ENCODE measurements at regions of chr3 and their contacts with region 1.

Region 1: GRCh38 chr3:186617038-186617946 is 4.4 kb downstream of the AHSG start:
- DNase-seq: peak; percentile 49
- ATAC-seq: peak; percentile 46
- H3K4me3 ChIP-seq: 0 out of 6 replicates have a peak overlapping the region, but pooled peaks of 1 of the 3 experiments have one; percentile 17
- H3K27ac ChIP-seq: peak overlapping the region; percentile 28
- H3K4me1 ChIP-seq: peaks cover 53% of the 10 kb centered on the region
- H3K27me3 ChIP-seq: no peaks in the 10 kb centered on the region; a peak in 1 of 5 replicates
- CTCF ChIP-seq: peak; percentile 85
- EP300 ChIP-seq: no peak
- POLR2A ChIP-seq: peak in 1 of 2 experiments; percentile 61; a peak in 3 of 4 replicates
- RAD21 ChIP-seq: peak; percentile 89

Region 2: DNA sequence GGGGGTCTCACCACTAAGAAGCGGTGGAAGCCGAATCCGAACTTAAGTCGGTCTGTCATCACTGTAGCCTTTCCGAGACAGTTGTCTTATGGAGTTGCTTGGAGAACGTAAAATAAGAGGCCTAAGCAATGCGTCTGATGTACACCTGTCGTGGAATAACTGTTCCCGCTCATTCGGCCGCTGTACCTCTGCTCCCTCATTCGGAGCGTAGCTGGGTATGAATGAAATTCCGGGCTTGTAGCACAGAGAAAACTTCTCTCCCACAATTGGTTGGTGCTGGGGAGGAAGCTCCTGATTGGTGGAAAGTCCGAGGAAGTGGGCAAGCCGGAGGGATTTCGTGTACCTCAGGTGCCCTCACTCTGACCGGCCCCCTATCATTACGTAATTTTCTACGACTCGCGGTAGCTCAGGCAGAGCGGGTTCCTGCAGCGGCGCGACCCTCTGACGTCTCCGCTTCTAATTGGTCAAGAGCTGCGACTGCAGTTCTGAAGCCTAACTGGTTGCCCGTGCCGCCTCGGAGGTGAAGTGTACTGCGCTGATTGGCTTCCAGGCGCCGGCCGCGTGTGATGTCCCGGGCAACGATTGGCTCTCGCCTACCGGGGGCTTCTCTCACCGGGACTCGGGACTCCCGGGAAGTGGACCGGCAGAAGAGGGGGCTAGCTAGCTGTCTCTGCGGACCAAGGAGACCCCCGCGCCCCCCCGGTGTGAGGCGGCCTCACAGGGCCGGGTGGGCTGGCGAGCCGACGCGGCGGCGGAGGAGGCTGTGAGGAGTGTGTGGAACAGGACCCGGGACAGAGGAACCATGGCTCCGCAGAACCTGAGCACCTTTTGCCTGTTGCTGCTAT is 47.0 kb before region 1 on chr3 and contains the start of gene DNAJB11:
- CTCF ChIA-PET with region 1: no interaction called
- POLR2A ChIA-PET with region 1: interaction called, 111 read pairs
- in situ Hi-C with region 1: no loop called
- intact Hi-C with region 1: loop called (anchors 2 kb)
- DNase-seq: peak; percentile 99
- ATAC-seq: peak; percentile 89
- H3K4me3 ChIP-seq: peak within 1 kb of the TSS; percentile 86 to 100 (median 93)
- H3K27ac ChIP-seq: peak within 1 kb of the TSS; percentile 86
- H3K4me1 ChIP-seq: peaks cover 61% of the 10 kb centered on the region
- H3K27me3 ChIP-seq: no peaks in the 10 kb centered on the region; a peak in 1 of 5 replicates
- CTCF ChIP-seq: peak; percentile 37; the same call in 1 of the 2 replicates
- EP300 ChIP-seq: peak; percentile 23 to 70; a peak in 2 of 4 replicates
- POLR2A ChIP-seq: peak; percentile 87 to 98
- RAD21 ChIP-seq: peak; percentile 56
- total RNA-seq, gene DNAJB11: 62.5 and 132 TPM in 2 replicates

Region 3: GRCh38 chr3:186589121-186589520 is 28.2 kb before region 1 on chr3:
- CTCF ChIA-PET with region 1: interaction called, 20 read pairs
- POLR2A ChIA-PET with region 1: interaction called, 854 read pairs
- in situ Hi-C with region 1: no loop called
- intact Hi-C with region 1: loop called (anchors 2 kb)
- DNase-seq: peak; percentile 60
- ATAC-seq: peak; percentile 42
- H3K4me3 ChIP-seq: no peak overlapping the region; a peak in 1 of 6 replicates
- H3K27ac ChIP-seq: peak overlapping the region; percentile 66
- H3K4me1 ChIP-seq: peaks cover 59% of the 10 kb centered on the region
- H3K27me3 ChIP-seq: no peaks in the 10 kb centered on the region
- CTCF ChIP-seq: peak; percentile 66
- EP300 ChIP-seq: no peak
- POLR2A ChIP-seq: no peak
- RAD21 ChIP-seq: peak; percentile 42; the same call in 1 of the 2 replicates

Region 4: DNA sequence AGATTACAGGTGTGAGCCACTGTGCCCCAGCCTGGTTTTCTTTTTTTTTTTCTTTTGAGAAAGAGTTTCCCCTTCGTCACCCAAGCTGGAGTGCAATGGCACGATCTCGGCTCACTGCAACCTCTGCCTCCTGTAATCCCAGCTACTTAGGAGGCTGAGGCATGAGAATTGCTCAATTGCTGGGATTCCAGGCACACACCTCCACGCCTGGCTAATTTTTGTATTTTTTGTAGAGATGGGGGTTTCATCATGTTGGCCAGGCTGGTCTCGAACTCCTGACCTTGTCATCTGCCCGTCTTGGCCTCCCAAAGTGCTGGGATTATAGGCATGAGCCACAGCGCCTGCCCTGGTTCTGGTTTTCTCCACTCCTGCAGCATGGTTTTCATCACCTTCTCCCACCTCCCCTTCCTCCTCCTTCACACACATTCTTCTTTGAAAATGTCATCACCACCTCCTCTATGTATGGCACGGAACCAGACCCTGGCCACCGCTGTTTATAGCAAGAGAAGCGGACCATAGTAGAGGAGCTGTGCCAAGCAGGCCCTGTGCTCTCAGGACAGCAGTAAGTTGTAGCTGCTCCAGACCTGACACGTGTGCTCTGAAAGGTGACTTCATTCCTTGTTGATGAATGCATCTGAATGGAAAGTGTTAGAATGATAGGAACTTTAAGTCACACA is 19.0 kb before region 1 on chr3:
- CTCF ChIA-PET with region 1: interaction called, 3 read pairs
- POLR2A ChIA-PET with region 1: interaction called, 854 read pairs
- in situ Hi-C with region 1: no loop called
- intact Hi-C with region 1: loop called (anchors 2 kb)
- DNase-seq: peak; percentile 68
- ATAC-seq: peak; percentile 38
- H3K4me3 ChIP-seq: peak overlapping the region in 1 of 3 experiments; percentile 63; a peak in 2 of 6 replicates
- H3K27ac ChIP-seq: peak overlapping the region; percentile 95
- H3K4me1 ChIP-seq: peaks cover 96% of the 10 kb centered on the region
- H3K27me3 ChIP-seq: no peaks in the 10 kb centered on the region
- CTCF ChIP-seq: no peak
- EP300 ChIP-seq: no peak
- POLR2A ChIP-seq: no peak
- RAD21 ChIP-seq: no peak

Region 5: DNA sequence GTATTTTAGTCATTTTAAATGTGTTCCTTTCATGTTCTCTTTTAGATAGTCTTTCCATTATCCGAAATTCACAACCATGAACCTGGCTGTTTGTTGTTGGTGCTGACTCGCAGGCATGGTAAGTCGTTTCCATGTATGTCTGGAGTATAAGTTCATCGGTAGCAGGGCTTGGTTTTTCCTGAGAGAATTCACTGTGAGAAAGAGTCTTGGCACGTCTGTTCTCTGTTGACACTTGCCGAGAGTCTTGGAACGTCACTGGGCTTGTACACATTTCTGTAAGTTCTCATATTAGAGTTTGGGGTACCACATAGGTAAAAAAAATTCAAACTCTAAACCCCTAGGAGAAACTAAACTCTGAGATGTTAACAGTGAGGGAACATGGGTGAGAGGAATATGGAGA is 136.7 kb after region 1 on chr3:
- CTCF ChIA-PET with region 1: interaction called, 8 read pairs
- POLR2A ChIA-PET with region 1: interaction called, 7 read pairs
- in situ Hi-C with region 1: loop called (anchors 10 kb)
- intact Hi-C with region 1: loop called (anchors 1 kb)
- DNase-seq: no peak
- ATAC-seq: no peak
- H3K4me3 ChIP-seq: no peak overlapping the region
- H3K27ac ChIP-seq: no peak overlapping the region
- H3K4me1 ChIP-seq: peaks cover 7% of the 10 kb centered on the region
- H3K27me3 ChIP-seq: no peaks in the 10 kb centered on the region
- CTCF ChIP-seq: no peak
- EP300 ChIP-seq: no peak
- POLR2A ChIP-seq: no peak
- RAD21 ChIP-seq: no peak

Region 6: GRCh38 chr3:186759231-186759930 is 142.1 kb after region 1 on chr3:
- CTCF ChIA-PET with region 1: no interaction called
- POLR2A ChIA-PET with region 1: interaction called, 4 read pairs
- in situ Hi-C with region 1: loop called (anchors 10 kb)
- intact Hi-C with region 1: no loop called
- DNase-seq: no peak
- ATAC-seq: no peak
- H3K4me3 ChIP-seq: no peak overlapping the region
- H3K27ac ChIP-seq: no peak overlapping the region
- H3K4me1 ChIP-seq: peaks cover 19% of the 10 kb centered on the region
- H3K27me3 ChIP-seq: no peaks in the 10 kb centered on the region
- CTCF ChIP-seq: no peak
- EP300 ChIP-seq: no peak
- POLR2A ChIP-seq: no peak
- RAD21 ChIP-seq: no peak

Region 7: DNA sequence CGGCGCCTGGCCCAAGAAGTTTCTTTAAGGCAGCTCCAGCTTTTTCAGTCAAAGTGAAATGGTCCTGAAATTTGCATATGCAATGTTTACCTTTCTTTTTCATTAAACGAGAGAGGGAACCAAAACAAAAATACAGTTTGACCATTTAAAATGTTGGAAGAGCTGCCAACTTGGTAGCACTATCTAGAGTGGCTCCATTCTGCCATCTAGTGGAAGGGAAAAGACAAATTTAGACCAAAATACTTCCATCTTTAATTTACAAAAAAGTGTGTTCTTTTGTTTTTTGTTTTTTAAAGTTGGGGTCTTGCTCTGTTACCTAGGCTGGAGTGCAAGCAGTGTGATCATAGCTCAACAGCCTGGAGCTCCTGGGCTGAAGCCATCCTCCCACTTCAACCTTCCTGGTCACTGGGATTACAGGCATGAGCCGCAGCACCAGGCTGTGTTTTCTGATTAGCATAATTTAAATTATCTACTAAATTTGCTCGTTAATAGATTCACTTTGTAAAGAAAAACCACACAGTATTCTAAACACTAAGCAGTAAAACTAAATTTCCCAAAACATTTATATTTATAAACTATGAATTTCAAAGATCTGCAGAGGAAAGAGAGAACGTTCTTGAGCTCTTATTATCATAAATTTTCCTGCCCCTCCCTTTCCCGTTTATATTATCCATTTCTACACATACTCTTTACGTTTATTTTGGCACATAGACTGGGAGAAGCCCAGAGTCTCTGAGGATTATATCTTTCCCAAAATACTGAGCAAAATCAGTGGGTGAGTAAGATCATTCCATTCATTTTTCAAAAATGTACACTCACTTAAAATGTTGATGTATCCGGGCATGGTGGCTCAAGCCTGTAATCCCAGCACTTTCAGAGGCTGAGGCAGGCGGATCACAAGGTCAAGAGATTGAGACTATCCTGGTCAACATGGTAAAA is 204.4 kb after region 1 on chr3:
- CTCF ChIA-PET with region 1: interaction called, 5 read pairs
- POLR2A ChIA-PET with region 1: interaction called, 4 read pairs
- in situ Hi-C with region 1: no loop called
- intact Hi-C with region 1: loop called (anchors 1 kb)
- DNase-seq: peak; percentile 56
- ATAC-seq: no peak
- H3K4me3 ChIP-seq: no peak overlapping the region
- H3K27ac ChIP-seq: no peak overlapping the region
- H3K4me1 ChIP-seq: peaks cover 59% of the 10 kb centered on the region
- H3K27me3 ChIP-seq: peaks cover 0 to 26% of the 10 kb centered on the region in 2 experiments
- CTCF ChIP-seq: peak; percentile 69
- EP300 ChIP-seq: no peak
- POLR2A ChIP-seq: no peak
- RAD21 ChIP-seq: 0 out of 2 replicates have a peak, but pooled peaks have one; percentile 52

Region 8: GRCh38 chr3:186930641-186931531 is 313.6 kb after region 1 on chr3:
- CTCF ChIA-PET with region 1: no interaction called
- POLR2A ChIA-PET with region 1: no interaction called
- in situ Hi-C with region 1: no loop called
- intact Hi-C with region 1: no loop called
- DNase-seq: peak; percentile 71
- ATAC-seq: peak; percentile 84
- H3K4me3 ChIP-seq: peak overlapping the region; percentile 68 to 81 (median 71)
- H3K27ac ChIP-seq: peak overlapping the region; percentile 45
- H3K4me1 ChIP-seq: peaks cover 25% of the 10 kb centered on the region
- H3K27me3 ChIP-seq: peaks cover 0 to 12% of the 10 kb centered on the region in 2 experiments; a peak in 3 of 5 replicates
- CTCF ChIP-seq: peak; percentile 53
- EP300 ChIP-seq: no peak
- POLR2A ChIP-seq: 0 out of 4 replicates have a peak, but pooled peaks of 1 of the 2 experiments have one; percentile 34
- RAD21 ChIP-seq: no peak; the same call in 1 of the 2 replicates

Measured in HepG2 (cell line).